CD8-positive, alpha-beta T cell (primary cell): ENCODE measurements at regions of chr10 and their contacts with region 1.

Region 1: DNA sequence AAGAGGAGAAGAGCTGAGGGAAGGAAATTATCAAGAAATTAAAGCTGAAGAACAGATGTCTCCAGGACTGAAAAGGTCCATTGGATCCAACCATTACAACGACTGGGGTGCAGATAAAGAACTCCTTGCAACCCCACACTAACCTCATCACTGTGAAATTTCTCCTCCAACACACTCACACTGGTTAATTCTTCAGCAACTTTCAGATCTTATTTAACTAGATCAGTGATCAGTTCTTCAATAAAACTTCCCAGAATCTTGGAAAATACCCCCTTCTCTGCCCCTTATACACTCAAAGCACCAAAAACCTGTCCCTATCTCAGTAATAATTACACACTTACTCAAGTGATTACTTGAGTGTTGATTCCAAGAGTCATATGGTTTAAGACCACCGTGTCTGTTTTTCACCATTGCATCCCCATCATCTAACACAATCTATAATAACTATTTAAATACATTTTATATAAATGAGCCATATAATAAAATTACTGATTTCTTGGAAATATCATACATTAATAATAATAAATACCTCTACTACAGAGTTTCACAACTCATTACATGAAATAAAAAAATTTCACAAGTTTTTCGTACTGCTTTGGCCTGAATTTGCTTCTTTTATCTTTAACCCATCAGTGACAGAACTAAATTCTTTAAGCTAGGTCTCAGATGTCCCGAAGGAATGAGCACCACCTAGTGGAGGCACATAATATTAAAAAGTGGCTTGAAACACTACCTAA is 123.7 kb downstream of the MPP7 start:
- DNase-seq: peak in 3 of 9 experiments; percentile 32 to 77 (median 68)
- ATAC-seq: peak; percentile 54
- H3K4me3 ChIP-seq: peak overlapping the region; percentile 22 to 45
- H3K4me3 Mint-ChIP-seq: peak overlapping the region; percentile 91
- H3K27ac ChIP-seq: peak overlapping the region in 1 of 2 experiments; percentile 69
- H3K27ac Mint-ChIP-seq: peak overlapping the region; percentile 95
- H3K4me1 ChIP-seq: peaks cover 16% of the 10 kb centered on the region
- H3K4me1 Mint-ChIP-seq: peaks cover 44% of the 10 kb centered on the region
- H3K27me3 ChIP-seq: no peaks in the 10 kb centered on the region
- H3K27me3 Mint-ChIP-seq: no peaks in the 10 kb centered on the region
- CTCF ChIP-seq: peak; percentile 93

Region 2: GRCh38 chr10:27558612-27559020 is 620.6 kb before region 1 on chr10:
- CTCF ChIA-PET with region 1: no interaction called
- POLR2A ChIA-PET with region 1: no interaction called
- intact Hi-C with region 1: loop called in 1 of 2 experiments (anchors 1 kb)
- DNase-seq: peak in 6 of 9 experiments; percentile 17 to 63 (median 35)
- ATAC-seq: no peak
- H3K4me3 ChIP-seq: no peak overlapping the region
- H3K4me3 Mint-ChIP-seq: no peak overlapping the region
- H3K27ac ChIP-seq: no peak overlapping the region
- H3K27ac Mint-ChIP-seq: no peak overlapping the region
- H3K4me1 ChIP-seq: no peaks in the 10 kb centered on the region
- H3K4me1 Mint-ChIP-seq: peaks cover 6% of the 10 kb centered on the region
- H3K27me3 ChIP-seq: no peaks in the 10 kb centered on the region
- H3K27me3 Mint-ChIP-seq: no peaks in the 10 kb centered on the region
- CTCF ChIP-seq: peak; percentile 61

Region 3: GRCh38 chr10:27742195-27743011 is 436.8 kb before region 1 on chr10:
- CTCF ChIA-PET with region 1: interaction called, 11 read pairs
- POLR2A ChIA-PET with region 1: no interaction called
- intact Hi-C with region 1: loop called (anchors 1 kb)
- DNase-seq: peak; percentile 55 to 85 (median 78)
- ATAC-seq: peak; percentile 82
- H3K4me3 ChIP-seq: peak overlapping the region; percentile 42 to 80
- H3K4me3 Mint-ChIP-seq: peak overlapping the region; percentile 87
- H3K27ac ChIP-seq: no peak overlapping the region
- H3K27ac Mint-ChIP-seq: no peak overlapping the region
- H3K4me1 ChIP-seq: peaks cover 57% of the 10 kb centered on the region
- H3K4me1 Mint-ChIP-seq: peaks cover 43% of the 10 kb centered on the region
- H3K27me3 ChIP-seq: peaks cover 53 to 65% of the 10 kb centered on the region in 2 experiments
- H3K27me3 Mint-ChIP-seq: peaks cover 57% of the 10 kb centered on the region
- CTCF ChIP-seq: peak; percentile 78

Region 4: DNA sequence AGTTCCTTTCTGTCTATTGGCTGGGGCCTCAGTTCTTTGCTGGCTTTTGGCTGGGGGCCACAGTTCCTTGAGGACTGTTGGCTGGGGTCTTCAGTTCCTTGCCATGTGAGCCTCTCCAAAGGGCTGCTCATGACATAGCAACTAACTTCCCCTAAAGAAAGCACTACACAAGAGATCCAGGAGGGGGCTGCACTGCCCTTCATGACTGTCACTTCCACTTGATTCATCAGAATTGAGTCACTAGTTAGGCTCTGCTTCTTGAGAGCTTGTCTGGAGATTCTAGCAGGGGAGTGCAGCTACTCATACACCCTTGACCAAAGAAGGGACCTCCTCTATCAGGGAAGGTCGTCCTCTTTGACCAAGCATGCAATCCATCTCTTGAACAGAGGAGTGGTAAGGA is 395.5 kb before region 1 on chr10:
- CTCF ChIA-PET with region 1: interaction called, 8 read pairs
- POLR2A ChIA-PET with region 1: no interaction called
- intact Hi-C with region 1: loop called (anchors 1 to 2 kb)
- DNase-seq: peak in 6 of 9 experiments; percentile 2 to 53 (median 30)
- ATAC-seq: peak; percentile 71
- H3K4me3 ChIP-seq: no peak overlapping the region
- H3K4me3 Mint-ChIP-seq: no peak overlapping the region
- H3K27ac ChIP-seq: no peak overlapping the region
- H3K27ac Mint-ChIP-seq: no peak overlapping the region
- H3K4me1 ChIP-seq: no peaks in the 10 kb centered on the region
- H3K4me1 Mint-ChIP-seq: no peaks in the 10 kb centered on the region
- H3K27me3 ChIP-seq: no peaks in the 10 kb centered on the region
- H3K27me3 Mint-ChIP-seq: peaks cover 14% of the 10 kb centered on the region
- CTCF ChIP-seq: peak; percentile 30

Region 5: GRCh38 chr10:27995311-27995710 is 183.9 kb before region 1 on chr10:
- CTCF ChIA-PET with region 1: no interaction called
- POLR2A ChIA-PET with region 1: no interaction called
- intact Hi-C with region 1: no loop called
- DNase-seq: no peak
- ATAC-seq: no peak
- H3K4me3 ChIP-seq: no peak overlapping the region
- H3K4me3 Mint-ChIP-seq: no peak overlapping the region
- H3K27ac ChIP-seq: no peak overlapping the region
- H3K27ac Mint-ChIP-seq: no peak overlapping the region
- H3K4me1 ChIP-seq: peaks cover 4% of the 10 kb centered on the region
- H3K4me1 Mint-ChIP-seq: peaks cover 13% of the 10 kb centered on the region
- H3K27me3 ChIP-seq: peaks cover 0 to 9% of the 10 kb centered on the region in 2 experiments
- H3K27me3 Mint-ChIP-seq: peaks cover 22% of the 10 kb centered on the region
- CTCF ChIP-seq: no peak